Activated CD8-positive, alpha-beta T cell treated with anti-CD3 and anti-CD28 coated beads, Interleukin-2, amount 10 ng/mL, durations not matched to agents 7 days and 5 days (primary cell): ENCODE measurements at regions of chr1 and their contacts with region 1.

Region 1: GRCh38 chr1:156751758-156752757 is 583 bp upstream of the HDGF start:
- DNase-seq: peak; percentile 98
- ATAC-seq: peak; percentile 83
- H3K4me3 Mint-ChIP-seq: peak overlapping the region; percentile 96
- H3K27ac Mint-ChIP-seq: peak overlapping the region; percentile 96
- H3K4me1 Mint-ChIP-seq: peaks cover 37% of the 10 kb centered on the region
- H3K27me3 Mint-ChIP-seq: no peaks in the 10 kb centered on the region

Region 2: DNA sequence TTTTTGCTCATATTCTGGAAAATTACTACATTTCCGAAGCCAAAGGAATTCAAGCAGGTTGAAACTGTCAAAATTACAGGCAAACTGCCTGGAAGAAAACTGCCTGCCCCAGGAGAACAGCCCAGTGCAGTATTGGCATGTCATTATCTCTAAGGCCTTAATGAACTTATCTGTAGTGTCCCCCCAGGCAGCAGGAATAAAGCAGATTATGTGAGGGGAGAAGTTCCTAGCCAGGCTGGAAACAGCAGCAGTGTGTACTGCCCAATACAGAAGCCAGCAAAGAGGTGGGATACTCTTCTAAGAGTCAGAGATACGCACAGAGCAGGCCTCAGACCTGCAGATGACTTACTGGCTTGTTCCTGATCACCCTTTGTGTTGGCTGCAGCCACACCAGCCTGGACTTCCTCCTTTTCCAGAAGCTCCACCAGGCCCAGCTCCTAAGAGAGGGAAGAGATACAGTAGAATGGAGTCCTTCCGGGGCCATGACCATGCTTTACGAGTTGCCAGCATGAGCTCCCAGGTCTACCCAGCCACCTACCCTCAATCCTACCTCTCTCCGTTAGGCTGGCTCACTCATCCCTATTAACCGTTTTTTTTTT is 191.4 kb before region 1 on chr1:
- CTCF ChIA-PET with region 1: no interaction called
- POLR2A ChIA-PET with region 1: no interaction called
- DNase-seq: no peak
- ATAC-seq: no peak
- H3K4me3 Mint-ChIP-seq: no peak overlapping the region
- H3K27ac Mint-ChIP-seq: no peak overlapping the region
- H3K4me1 Mint-ChIP-seq: no peaks in the 10 kb centered on the region
- H3K27me3 Mint-ChIP-seq: no peaks in the 10 kb centered on the region

Region 3: GRCh38 chr1:156740679-156741612 is 11.1 kb before region 1 on chr1 and contains the start of gene MRPL24:
- CTCF ChIA-PET with region 1: interaction called, 13 read pairs
- POLR2A ChIA-PET with region 1: interaction called, 42 read pairs
- DNase-seq: peak; percentile 99
- ATAC-seq: peak; percentile 89
- H3K4me3 Mint-ChIP-seq: peak within 1 kb of the TSS; percentile 99
- H3K27ac Mint-ChIP-seq: peak within 1 kb of the TSS; percentile 98
- H3K4me1 Mint-ChIP-seq: peaks cover 59% of the 10 kb centered on the region
- H3K27me3 Mint-ChIP-seq: no peaks in the 10 kb centered on the region
- total RNA-seq, gene MRPL24: 59.8 to 62.6 TPM